Activated naive CD4-positive, alpha-beta T cell treated with anti-CD3 and anti-CD28 coated beads for 36 hours (primary cell): ENCODE measurements at regions of chr16 and their contacts with region 1.

Region 1: GRCh38 chr16:58129097-58129936 is at the start of gene CFAP20:
- DNase-seq: peak; percentile 98
- H3K4me3 Mint-ChIP-seq: peak within 1 kb of the TSS; percentile 96
- H3K27ac Mint-ChIP-seq: peak within 1 kb of the TSS; percentile 91
- H3K4me1 Mint-ChIP-seq: peaks cover 40% of the 10 kb centered on the region
- H3K27me3 Mint-ChIP-seq: no peaks in the 10 kb centered on the region
- total RNA-seq, gene CFAP20: 31.2 to 31.4 TPM

Region 2: GRCh38 chr16:57600048-57600835 is 529.1 kb before region 1 on chr16:
- CTCF ChIA-PET with region 1: no interaction called
- intact Hi-C with region 1: loop called (anchors 5 kb)
- DNase-seq: peak; percentile 65
- H3K4me3 Mint-ChIP-seq: no peak overlapping the region
- H3K27ac Mint-ChIP-seq: no peak overlapping the region
- H3K4me1 Mint-ChIP-seq: peaks cover 25% of the 10 kb centered on the region
- H3K27me3 Mint-ChIP-seq: no peaks in the 10 kb centered on the region

Region 3: DNA sequence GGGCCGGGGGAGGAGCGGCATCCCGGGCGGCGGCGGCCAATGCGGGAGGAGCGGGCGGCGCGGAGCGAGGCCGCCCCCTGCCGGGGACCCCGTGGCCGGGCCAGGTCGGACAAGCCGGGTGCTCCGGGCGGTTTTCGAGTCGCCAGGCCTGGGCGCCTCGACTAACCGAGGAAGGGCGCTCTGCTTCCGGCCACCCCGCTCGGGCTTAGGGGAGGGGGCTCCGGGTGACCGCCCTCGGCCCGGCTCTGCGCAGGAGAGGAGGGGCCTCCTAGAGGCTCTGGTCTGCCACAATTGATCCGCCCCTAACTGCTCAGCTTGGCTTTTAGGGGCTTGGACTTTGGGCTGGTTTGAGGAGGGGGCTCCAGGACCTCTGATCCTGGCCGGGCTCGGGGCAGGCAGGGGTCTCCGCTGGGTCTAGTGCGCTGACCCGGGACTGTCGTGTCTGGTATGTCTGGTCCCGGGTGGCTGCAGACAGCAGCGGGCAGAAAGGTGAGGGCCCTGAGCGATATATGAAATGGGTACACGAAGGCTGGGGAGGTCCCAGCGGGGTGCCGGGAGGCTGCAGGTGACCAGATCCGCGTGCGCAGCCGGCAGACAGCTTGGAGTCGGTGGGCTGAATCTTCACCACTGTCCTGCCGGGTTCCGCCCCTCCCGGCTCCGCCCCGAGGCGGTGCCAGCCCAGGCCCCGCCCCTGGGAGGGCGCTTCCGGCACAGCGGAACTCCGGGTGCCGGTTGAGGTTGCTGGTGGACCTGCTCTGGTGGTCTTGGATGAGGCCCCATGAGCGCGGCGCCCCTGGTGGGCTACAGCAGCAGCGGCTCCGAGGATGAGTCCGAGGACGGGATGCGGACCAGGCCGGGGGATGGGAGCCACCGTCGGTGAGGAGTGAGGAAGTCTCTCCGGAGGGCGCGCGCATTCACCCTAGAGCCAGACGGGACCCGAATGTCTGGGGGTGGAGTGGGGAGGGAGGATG is 128.3 kb before region 1 on chr16 and contains the start of gene USB1:
- CTCF ChIA-PET with region 1: no interaction called
- intact Hi-C with region 1: loop called (anchors 1 kb)
- DNase-seq: peak; percentile 78
- H3K4me3 Mint-ChIP-seq: peak within 1 kb of the TSS; percentile 91
- H3K27ac Mint-ChIP-seq: peak within 1 kb of the TSS; percentile 71
- H3K4me1 Mint-ChIP-seq: peaks cover 51% of the 10 kb centered on the region
- H3K27me3 Mint-ChIP-seq: no peaks in the 10 kb centered on the region
- total RNA-seq, gene USB1: 30.6 to 32.3 TPM

Region 4: GRCh38 chr16:58160855-58161254 is 31.5 kb after region 1 on chr16:
- CTCF ChIA-PET with region 1: no interaction called
- intact Hi-C with region 1: no loop called
- DNase-seq: peak; percentile 15
- H3K4me3 Mint-ChIP-seq: no peak overlapping the region
- H3K27ac Mint-ChIP-seq: peak overlapping the region; percentile 54
- H3K4me1 Mint-ChIP-seq: peaks cover 1% of the 10 kb centered on the region
- H3K27me3 Mint-ChIP-seq: no peaks in the 10 kb centered on the region

Region 5: GRCh38 chr16:58198022-58198683 is 68.8 kb after region 1 on chr16 and contains the start of gene CSNK2A2:
- CTCF ChIA-PET with region 1: interaction called, 6 read pairs
- intact Hi-C with region 1: loop called (anchors 1 kb)
- DNase-seq: peak; percentile 64
- H3K4me3 Mint-ChIP-seq: peak within 1 kb of the TSS; percentile 81
- H3K27ac Mint-ChIP-seq: peak within 1 kb of the TSS; percentile 66
- H3K4me1 Mint-ChIP-seq: peaks cover 30% of the 10 kb centered on the region
- H3K27me3 Mint-ChIP-seq: peaks cover 7% of the 10 kb centered on the region
- total RNA-seq, gene CSNK2A2: 86.0 to 86.7 TPM

Region 6: DNA sequence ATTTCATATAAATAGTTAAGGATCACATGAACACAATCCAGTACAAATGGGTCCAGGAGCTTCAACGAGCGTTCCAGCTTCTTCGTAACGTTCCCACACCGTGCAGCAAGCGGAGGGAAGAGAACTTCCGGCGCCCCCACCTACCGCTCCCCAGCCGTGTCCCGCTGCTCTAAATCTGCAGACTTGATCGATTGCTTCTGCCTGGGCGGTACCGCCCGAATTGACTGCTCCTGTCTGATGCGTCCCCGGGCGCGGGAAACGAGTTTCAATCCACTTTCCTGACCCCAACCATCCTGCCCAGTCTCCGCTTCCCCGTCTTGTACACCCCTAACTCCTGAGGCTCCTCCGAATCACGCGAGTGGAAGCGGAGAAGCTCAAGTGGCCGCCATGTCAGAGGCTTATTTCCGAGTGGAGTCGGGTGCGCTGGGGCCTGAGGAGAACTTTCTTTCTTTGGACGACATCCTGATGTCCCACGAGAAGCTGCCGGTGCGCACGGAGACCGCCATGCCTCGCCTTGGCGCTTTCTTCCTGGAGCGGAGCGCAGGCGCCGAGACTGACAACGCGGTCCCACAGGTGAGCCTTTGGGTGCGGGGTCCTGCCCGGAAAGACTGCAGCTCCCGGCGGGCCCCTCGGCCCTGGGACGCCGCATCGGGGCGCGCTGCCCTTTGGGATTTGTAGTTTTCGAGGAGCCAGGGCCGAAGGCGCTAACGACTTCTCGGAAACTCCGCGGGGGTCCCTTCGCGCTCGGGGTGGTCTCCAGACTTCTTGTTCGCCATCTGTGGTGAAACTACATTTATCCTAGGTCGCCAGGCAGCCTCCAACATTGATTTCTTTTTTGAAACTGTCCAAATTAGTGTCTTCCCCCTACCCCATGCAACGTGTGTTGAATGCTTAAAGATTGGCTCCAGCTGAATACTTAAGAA is 263.2 kb after region 1 on chr16 and contains the start of gene GINS3:
- CTCF ChIA-PET with region 1: no interaction called
- intact Hi-C with region 1: loop called (anchors 1 kb)
- DNase-seq: peak; percentile 94
- H3K4me3 Mint-ChIP-seq: peak within 1 kb of the TSS; percentile 98
- H3K27ac Mint-ChIP-seq: peak within 1 kb of the TSS; percentile 99
- H3K4me1 Mint-ChIP-seq: peaks cover 16% of the 10 kb centered on the region
- H3K27me3 Mint-ChIP-seq: no peaks in the 10 kb centered on the region
- total RNA-seq, gene GINS3: 19.2 to 20.3 TPM

Region 7: DNA sequence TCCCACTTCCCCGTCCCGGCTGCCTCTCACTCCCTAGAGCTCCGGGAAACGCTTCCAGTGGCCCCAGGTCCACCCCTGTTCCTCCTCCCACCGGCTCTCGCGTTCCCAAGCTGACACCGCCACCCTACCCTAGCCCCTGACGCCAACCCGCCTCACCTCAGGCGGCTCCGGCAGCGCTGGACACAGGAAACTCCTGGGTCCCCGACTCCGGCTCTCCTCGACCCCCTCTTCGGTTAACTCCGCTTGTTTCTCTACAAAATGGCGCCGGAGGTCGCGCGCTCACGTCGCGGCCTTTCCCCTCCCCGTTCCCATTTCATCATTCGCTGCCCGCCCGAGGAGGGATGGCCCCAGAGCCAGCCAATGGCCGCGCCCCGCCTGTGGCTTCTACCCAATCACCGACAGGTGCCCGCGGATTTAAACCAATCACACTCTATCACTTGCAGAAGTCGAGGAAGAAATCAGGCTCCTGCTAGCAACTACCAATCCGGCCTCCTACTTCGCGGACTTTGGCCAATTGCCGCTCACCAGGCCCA is 500.3 kb after region 1 on chr16 and contains the start of gene CNOT1:
- CTCF ChIA-PET with region 1: no interaction called
- intact Hi-C with region 1: loop called (anchors 1 kb)
- DNase-seq: peak; percentile 99
- H3K4me3 Mint-ChIP-seq: peak within 1 kb of the TSS; percentile 99
- H3K27ac Mint-ChIP-seq: peak within 1 kb of the TSS; percentile 100
- H3K4me1 Mint-ChIP-seq: peaks cover 25% of the 10 kb centered on the region
- H3K27me3 Mint-ChIP-seq: peaks cover 1% of the 10 kb centered on the region
- total RNA-seq, gene CNOT1: 283 to 287 TPM